ENCODE measurements at regions of chr3 and their contacts with region 1.

Region 1: GRCh38 chr3:157088601-157089454 is 71.1 kb downstream of the CCNL1 start:
- DNase-seq: peak; percentile 96

Region 2: DNA sequence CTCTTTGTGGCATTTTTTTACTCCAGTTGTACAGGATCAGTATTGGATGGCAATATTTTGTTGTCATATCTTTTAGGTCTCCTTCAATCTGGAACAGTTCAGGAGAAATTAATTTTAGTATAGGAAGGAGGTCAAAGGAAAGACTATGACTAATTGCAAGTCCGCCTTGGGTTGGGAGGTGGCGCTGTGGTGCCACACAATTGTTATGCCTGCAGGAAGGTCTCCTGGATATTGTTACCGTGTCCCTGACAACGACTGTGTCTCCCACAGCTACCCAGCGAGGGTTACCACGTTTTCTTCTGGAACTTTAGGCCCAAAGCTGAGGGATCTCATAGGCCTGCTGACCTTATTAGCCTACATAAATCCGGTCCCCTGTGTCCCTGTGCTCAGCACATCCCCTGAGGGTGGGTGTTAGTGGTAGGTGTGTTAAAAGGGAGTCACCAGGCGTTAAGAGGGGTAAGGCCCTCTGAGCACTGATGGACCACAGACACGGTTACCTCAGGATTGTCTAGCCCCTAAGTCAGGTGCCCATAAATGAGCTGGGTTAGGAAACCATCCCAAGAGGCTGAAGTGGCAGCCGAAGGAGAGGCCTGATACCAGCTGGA is 936.9 kb before region 1 on chr3:
- intact Hi-C with region 1: loop called (anchors 5 kb)
- DNase-seq: no peak

Region 3: GRCh38 chr3:156554842-156555687 is 533.8 kb before region 1 on chr3 and contains the start of gene SSR3:
- intact Hi-C with region 1: loop called (anchors 5 kb)
- DNase-seq: peak; percentile 100
- total RNA-seq, gene SSR3: 155 TPM

Region 4: GRCh38 chr3:156826144-156826895 is 262.5 kb before region 1 on chr3 and contains the start of gene LEKR1:
- intact Hi-C with region 1: loop called (anchors 5 kb)
- DNase-seq: peak; percentile 91
- total RNA-seq, gene LEKR1: 0.32 TPM

Region 5: DNA sequence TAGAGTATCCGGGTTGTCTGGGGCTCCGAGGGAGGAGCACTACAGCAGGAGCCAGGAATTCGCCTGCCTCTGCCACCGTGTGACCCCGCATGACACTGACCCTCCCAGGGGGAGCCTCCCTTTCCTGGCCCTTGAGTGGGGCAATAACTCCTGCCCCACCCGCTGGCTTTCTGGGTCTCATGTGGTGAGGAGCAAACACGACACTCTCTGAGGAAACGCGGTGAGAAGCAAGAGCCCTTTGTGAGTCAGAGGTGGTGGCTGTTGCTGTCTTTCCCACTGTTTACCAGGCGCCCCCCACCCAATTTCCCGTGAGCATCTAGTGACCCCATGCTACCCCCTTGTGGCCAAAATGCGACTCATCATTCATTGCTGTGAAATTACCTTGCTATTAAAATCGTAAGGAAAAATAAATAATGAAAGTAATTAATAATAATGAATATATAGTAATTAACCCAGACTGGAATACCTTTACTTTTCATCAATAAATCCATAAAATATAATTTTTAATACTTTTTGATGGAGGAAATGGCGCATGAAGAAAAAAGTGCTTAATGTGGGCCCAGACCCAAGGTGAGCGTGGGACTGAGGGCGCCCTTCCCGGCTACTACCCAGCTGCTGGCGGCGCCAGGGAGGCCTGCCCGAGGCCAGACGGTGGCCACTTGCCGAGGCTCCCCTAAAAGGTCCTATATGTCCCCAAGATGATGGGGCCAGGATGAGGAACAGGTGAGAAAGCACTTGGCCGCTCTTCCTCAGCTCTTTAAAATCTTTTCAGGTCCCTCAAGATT is 41.8 kb after region 1 on chr3:
- intact Hi-C with region 1: loop called (anchors 2 kb)
- DNase-seq: no peak

Region 6: GRCh38 chr3:157154563-157155330 is 65.9 kb after region 1 on chr3:
- intact Hi-C with region 1: no loop called
- DNase-seq: no peak

Measured in cardiac septum (tissue), 1 donor.